HepG2 (cell line): ENCODE measurements at regions of chr3 and their contacts with region 1.

Region 1: DNA sequence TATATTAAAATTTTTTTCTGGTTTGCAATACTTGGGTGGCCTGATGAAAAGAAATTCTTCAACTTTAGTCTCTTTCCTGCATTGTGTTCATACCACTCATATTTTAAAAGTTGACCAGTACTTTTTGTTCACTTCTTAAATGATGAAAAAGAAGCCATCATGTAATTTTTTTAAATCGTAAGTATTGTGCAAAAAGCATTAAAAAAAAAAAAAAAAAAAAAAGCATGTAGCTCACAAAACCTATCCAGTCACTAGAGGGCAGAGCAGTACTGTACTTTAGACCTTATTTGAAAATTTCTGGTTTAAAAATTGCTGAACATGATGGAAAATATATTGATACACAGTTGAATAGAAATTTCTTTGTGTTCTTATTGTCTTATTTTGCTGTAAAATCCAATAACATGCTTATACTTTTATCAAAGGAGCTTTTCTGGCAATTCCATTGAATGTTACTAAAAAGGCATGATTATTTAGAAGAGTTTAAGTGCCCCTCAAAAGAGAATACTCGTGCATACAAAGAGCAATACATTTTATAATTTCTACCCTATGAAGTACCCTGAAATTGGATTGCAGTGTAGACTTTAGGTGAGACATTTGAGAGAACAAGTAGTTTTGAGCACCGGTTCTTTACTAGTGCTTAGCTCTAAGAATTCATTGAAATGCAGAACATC is 137.7 kb downstream of the BBX start:
- DNase-seq: peak; percentile 39
- ATAC-seq: no peak
- H3K4me3 ChIP-seq: no peak overlapping the region
- H3K27ac ChIP-seq: no peak overlapping the region
- H3K4me1 ChIP-seq: no peaks in the 10 kb centered on the region
- H3K27me3 ChIP-seq: no peaks in the 10 kb centered on the region
- CTCF ChIP-seq: peak; percentile 33; the same call in 1 of the 2 replicates
- EP300 ChIP-seq: no peak
- POLR2A ChIP-seq: no peak
- RAD21 ChIP-seq: no peak

Region 2: DNA sequence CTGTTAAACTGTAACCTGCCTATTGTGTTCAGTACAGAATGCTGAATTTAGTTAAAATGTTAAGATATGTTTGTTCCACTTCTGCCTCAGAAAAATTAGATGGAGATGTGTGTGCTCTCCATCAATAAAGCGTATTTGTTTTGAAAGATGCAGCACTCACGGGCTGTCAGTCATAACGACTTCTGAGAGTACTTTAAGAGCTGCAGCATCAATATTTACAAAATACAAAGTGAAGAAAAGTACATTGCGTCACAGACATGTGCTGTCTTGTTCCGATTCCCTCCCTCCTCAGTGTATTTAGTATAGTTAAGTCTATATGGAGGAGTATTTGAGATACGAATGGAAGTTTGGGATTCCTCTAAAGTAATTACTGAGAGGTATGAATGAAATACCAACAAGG is 28.9 kb after region 1 on chr3:
- CTCF ChIA-PET with region 1: no interaction called
- POLR2A ChIA-PET with region 1: no interaction called
- in situ Hi-C with region 1: no loop called
- intact Hi-C with region 1: loop called (anchors 2 kb)
- DNase-seq: peak; percentile 73
- ATAC-seq: no peak; the same call in 1 of the 3 replicates
- H3K4me3 ChIP-seq: no peak overlapping the region; a peak in 1 of 6 replicates
- H3K27ac ChIP-seq: peak overlapping the region; percentile 50
- H3K4me1 ChIP-seq: peaks cover 75% of the 10 kb centered on the region
- H3K27me3 ChIP-seq: no peaks in the 10 kb centered on the region
- CTCF ChIP-seq: no peak
- EP300 ChIP-seq: peak in 1 of 2 experiments; percentile 74; a peak in 2 of 4 replicates
- POLR2A ChIP-seq: no peak
- RAD21 ChIP-seq: no peak

Region 3: DNA sequence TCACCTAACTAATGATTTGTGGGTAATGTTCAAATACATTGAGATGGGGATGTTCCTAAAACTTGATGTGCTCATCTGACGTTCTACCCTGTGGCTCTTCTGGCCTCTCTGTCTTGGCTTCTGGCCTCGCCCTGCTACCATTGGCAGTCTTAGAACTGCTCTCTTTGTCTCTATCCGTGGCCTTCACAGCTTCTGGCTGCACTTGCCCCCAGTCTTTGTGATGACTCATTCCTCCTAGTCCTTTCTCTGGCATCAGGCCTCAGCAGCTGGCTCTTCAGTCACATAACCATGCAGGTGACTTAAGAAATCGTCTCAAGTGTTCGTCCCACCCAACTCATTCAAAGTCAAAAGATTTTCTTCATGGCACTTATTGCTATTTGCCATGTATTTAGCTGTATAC is 50.4 kb after region 1 on chr3:
- CTCF ChIA-PET with region 1: no interaction called
- POLR2A ChIA-PET with region 1: no interaction called
- in situ Hi-C with region 1: no loop called
- intact Hi-C with region 1: no loop called
- DNase-seq: no peak
- ATAC-seq: no peak
- H3K4me3 ChIP-seq: no peak overlapping the region
- H3K27ac ChIP-seq: no peak overlapping the region
- H3K4me1 ChIP-seq: no peaks in the 10 kb centered on the region
- H3K27me3 ChIP-seq: no peaks in the 10 kb centered on the region
- CTCF ChIP-seq: no peak
- EP300 ChIP-seq: no peak
- POLR2A ChIP-seq: no peak
- RAD21 ChIP-seq: no peak

Region 4: DNA sequence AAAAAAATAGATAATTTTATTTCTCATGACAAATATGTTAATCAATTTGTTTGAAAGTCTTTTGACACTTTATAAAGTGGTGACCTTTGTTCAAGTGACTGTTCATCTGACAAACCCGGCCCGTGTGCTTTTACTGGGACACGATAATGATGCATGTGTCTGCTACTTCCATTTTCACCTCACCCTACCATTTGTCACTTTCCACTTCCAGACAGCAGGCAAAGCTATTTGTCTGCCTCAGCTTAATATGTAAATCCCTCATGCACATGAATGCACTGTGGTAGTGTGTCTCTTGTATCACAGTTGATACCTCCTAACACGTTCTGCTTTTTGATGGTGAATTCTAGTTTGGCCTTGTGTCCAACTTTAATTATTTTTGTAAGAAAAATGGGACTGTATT is 66.7 kb after region 1 on chr3:
- CTCF ChIA-PET with region 1: no interaction called
- POLR2A ChIA-PET with region 1: no interaction called
- in situ Hi-C with region 1: no loop called
- intact Hi-C with region 1: no loop called
- DNase-seq: no peak
- ATAC-seq: no peak
- H3K4me3 ChIP-seq: no peak overlapping the region
- H3K27ac ChIP-seq: no peak overlapping the region
- H3K4me1 ChIP-seq: no peaks in the 10 kb centered on the region
- H3K27me3 ChIP-seq: no peaks in the 10 kb centered on the region
- CTCF ChIP-seq: no peak
- EP300 ChIP-seq: no peak
- POLR2A ChIP-seq: no peak
- RAD21 ChIP-seq: no peak

Region 5: GRCh38 chr3:107740992-107741896 is 80.8 kb after region 1 on chr3:
- CTCF ChIA-PET with region 1: interaction called, 26 read pairs
- POLR2A ChIA-PET with region 1: no interaction called
- in situ Hi-C with region 1: no loop called
- intact Hi-C with region 1: loop called (anchors 1 kb)
- DNase-seq: peak; percentile 8
- ATAC-seq: no peak
- H3K4me3 ChIP-seq: no peak overlapping the region
- H3K27ac ChIP-seq: no peak overlapping the region
- H3K4me1 ChIP-seq: peaks cover 11% of the 10 kb centered on the region; the same call in 1 of the 2 replicates
- H3K27me3 ChIP-seq: no peaks in the 10 kb centered on the region; a peak in 1 of 5 replicates
- CTCF ChIP-seq: peak; percentile 36; the same call in 1 of the 2 replicates
- EP300 ChIP-seq: no peak
- POLR2A ChIP-seq: no peak
- RAD21 ChIP-seq: 0 out of 2 replicates have a peak, but pooled peaks have one; percentile 34

Region 6: GRCh38 chr3:107846279-107846852 is 185.9 kb after region 1 on chr3:
- CTCF ChIA-PET with region 1: interaction called, 8 read pairs
- POLR2A ChIA-PET with region 1: no interaction called
- in situ Hi-C with region 1: no loop called
- intact Hi-C with region 1: loop called (anchors 1 kb)
- DNase-seq: peak; percentile 47
- ATAC-seq: peak; percentile 97
- H3K4me3 ChIP-seq: peak overlapping the region in 1 of 3 experiments; percentile 0; a peak in 1 of 6 replicates
- H3K27ac ChIP-seq: no peak overlapping the region
- H3K4me1 ChIP-seq: peaks cover 35% of the 10 kb centered on the region
- H3K27me3 ChIP-seq: peaks cover 0 to 15% of the 10 kb centered on the region in 2 experiments; a peak in 2 of 5 replicates
- CTCF ChIP-seq: peak; percentile 89
- EP300 ChIP-seq: no peak
- POLR2A ChIP-seq: no peak
- RAD21 ChIP-seq: peak; percentile 74

Region 7: DNA sequence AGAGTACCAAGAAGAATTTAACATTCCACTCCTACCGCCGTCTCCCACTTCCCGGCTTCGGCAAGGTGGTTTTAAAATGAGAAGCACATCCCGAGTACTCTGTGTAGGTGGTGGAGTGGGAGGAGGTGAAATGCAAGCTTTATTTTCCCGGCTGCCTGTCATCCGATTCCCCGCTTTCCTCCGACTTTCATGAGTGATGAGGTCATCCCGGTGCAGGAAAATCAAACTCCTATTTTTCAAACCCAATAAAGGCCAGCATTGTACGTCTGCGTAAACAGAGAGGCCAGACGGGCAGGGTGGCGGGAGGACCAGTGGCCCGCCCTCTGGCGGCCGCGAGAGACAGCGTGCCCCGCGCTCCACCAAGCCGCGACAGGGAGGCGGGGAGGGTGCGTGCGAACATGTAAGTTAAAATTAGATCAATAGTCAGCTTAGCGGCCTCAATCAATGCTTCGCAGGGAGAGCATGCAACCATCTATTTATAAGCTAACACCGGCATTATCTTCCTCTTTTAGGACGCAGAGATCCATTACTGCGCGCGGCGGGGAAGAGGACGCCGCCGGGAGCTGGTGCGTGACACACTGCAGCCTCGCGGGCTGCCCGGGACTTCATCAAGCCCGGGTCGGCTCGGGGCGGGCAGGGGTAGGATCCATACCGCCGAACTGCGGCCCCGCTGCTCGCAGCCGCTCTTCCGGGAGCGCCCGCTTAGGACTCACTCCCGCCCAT is 267.1 kb after region 1 on chr3:
- CTCF ChIA-PET with region 1: interaction called, 5 read pairs
- POLR2A ChIA-PET with region 1: no interaction called
- in situ Hi-C with region 1: no loop called
- intact Hi-C with region 1: loop called (anchors 5 kb)
- DNase-seq: peak; percentile 66
- ATAC-seq: peak; percentile 100
- H3K4me3 ChIP-seq: peak overlapping the region; percentile 55 to 63 (median 57)
- H3K27ac ChIP-seq: no peak overlapping the region
- H3K4me1 ChIP-seq: peaks cover 6% of the 10 kb centered on the region; the same call in 1 of the 2 replicates
- H3K27me3 ChIP-seq: peaks cover 4 to 21% of the 10 kb centered on the region in 2 experiments; a peak in 4 of 5 replicates
- CTCF ChIP-seq: peak; percentile 91
- EP300 ChIP-seq: peak in 1 of 2 experiments; percentile 7; a peak in 1 of 4 replicates
- POLR2A ChIP-seq: no peak
- RAD21 ChIP-seq: peak; percentile 76